Activated CD8-positive, alpha-beta T cell treated with anti-CD3 and anti-CD28 coated beads, Interleukin-2, amount 10 ng/mL, durations not matched to agents 7 days and 5 days (primary cell): ENCODE measurements at regions of chr18 and their contacts with region 1.

Region 1: GRCh38 chr18:11654736-11655605 is 34.1 kb upstream of the GNAL start:
- DNase-seq: peak; percentile 56
- ATAC-seq: peak; percentile 53
- H3K4me3 Mint-ChIP-seq: no peak overlapping the region
- H3K27ac Mint-ChIP-seq: no peak overlapping the region
- H3K4me1 Mint-ChIP-seq: no peaks in the 10 kb centered on the region
- H3K27me3 Mint-ChIP-seq: peaks cover 29% of the 10 kb centered on the region

Region 2: GRCh38 chr18:11600321-11600720 is 54.6 kb before region 1 on chr18:
- CTCF ChIA-PET with region 1: no interaction called
- POLR2A ChIA-PET with region 1: no interaction called
- DNase-seq: no peak
- ATAC-seq: no peak
- H3K4me3 Mint-ChIP-seq: no peak overlapping the region
- H3K27ac Mint-ChIP-seq: no peak overlapping the region
- H3K4me1 Mint-ChIP-seq: no peaks in the 10 kb centered on the region
- H3K27me3 Mint-ChIP-seq: peaks cover 41% of the 10 kb centered on the region

Region 3: GRCh38 chr18:11665587-11665986 is 10.6 kb after region 1 on chr18:
- CTCF ChIA-PET with region 1: interaction called, 10 read pairs
- POLR2A ChIA-PET with region 1: no interaction called
- DNase-seq: no peak
- ATAC-seq: no peak
- H3K4me3 Mint-ChIP-seq: no peak overlapping the region
- H3K27ac Mint-ChIP-seq: no peak overlapping the region
- H3K4me1 Mint-ChIP-seq: no peaks in the 10 kb centered on the region
- H3K27me3 Mint-ChIP-seq: peaks cover 5% of the 10 kb centered on the region

Region 4: GRCh38 chr18:11733031-11733430 is 78.1 kb after region 1 on chr18:
- CTCF ChIA-PET with region 1: interaction called, 10 read pairs
- POLR2A ChIA-PET with region 1: no interaction called
- DNase-seq: peak; percentile 77
- ATAC-seq: peak; percentile 93
- H3K4me3 Mint-ChIP-seq: no peak overlapping the region
- H3K27ac Mint-ChIP-seq: no peak overlapping the region
- H3K4me1 Mint-ChIP-seq: no peaks in the 10 kb centered on the region
- H3K27me3 Mint-ChIP-seq: peaks cover 16% of the 10 kb centered on the region

Region 5: DNA sequence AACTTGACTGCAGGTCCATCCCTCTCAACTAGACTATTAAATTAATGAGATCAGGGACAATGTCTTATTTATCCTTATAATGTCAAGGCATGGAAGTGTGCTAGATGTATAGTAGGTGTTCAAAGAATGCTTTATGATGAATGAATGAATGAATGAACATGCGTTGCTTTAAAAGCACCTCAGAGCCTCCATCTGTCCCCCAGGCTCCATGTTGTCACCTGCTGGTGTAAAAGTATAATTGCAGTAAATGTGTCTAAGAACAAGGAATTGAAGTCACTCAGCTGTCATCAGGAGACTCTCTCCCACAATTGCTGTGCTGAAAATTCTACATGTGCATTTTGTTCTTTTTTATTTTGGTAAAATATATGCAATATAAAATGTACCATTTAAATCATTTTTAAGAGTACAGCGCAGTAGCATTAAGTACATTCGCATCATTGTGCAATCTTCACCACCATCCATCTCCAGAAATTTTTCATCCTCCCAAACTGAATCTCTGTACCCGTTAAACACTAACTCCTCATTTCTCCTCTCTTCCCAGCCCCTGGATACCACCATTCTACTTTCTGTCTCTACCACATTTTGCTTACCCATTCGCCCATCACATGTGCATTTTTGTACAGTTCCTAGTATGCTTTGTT is 86.7 kb after region 1 on chr18:
- CTCF ChIA-PET with region 1: interaction called, 14 read pairs
- POLR2A ChIA-PET with region 1: no interaction called
- DNase-seq: no peak
- ATAC-seq: no peak
- H3K4me3 Mint-ChIP-seq: no peak overlapping the region
- H3K27ac Mint-ChIP-seq: no peak overlapping the region
- H3K4me1 Mint-ChIP-seq: no peaks in the 10 kb centered on the region
- H3K27me3 Mint-ChIP-seq: peaks cover 30% of the 10 kb centered on the region

Region 6: DNA sequence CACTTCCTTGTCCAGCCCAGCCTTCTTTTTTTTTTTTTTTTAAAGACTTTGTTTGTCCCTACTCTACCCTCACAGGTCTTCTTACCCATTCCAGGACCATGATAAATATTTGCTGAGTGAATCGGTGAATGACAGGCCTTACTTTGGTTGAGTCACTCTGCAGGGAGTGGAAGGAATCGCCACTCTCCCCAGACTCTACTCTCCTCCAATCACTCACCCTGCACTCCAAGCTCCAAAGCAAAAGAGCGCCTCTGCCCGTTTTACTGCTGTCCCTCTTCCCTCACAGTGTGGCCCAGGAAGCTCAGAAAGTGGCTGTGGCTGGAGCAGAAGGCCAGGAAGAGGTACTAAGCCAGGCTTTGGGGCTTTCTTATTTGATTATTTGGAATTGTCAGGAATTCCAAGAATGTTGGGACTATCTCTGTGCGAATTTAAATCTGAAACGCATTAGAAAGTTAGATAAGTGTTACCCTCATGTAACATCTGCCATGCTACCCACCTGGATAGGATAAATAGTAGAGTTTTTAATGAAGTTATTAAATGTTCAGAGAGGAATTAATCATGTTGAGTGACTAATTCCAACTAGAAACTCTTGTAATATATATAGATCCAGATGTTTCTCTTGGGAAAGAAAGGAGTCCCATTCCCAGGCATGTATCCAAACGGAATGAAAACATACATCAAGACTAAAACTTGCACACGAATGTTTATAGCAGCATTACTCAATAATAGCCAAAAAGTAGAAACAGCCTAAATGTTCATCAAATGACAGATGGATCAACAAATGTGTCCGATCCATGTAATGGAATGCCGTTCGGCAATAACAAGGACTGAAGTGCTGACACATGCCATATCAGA is 153.3 kb after region 1 on chr18:
- CTCF ChIA-PET with region 1: no interaction called
- POLR2A ChIA-PET with region 1: no interaction called
- DNase-seq: no peak
- ATAC-seq: no peak
- H3K4me3 Mint-ChIP-seq: no peak overlapping the region
- H3K27ac Mint-ChIP-seq: no peak overlapping the region
- H3K4me1 Mint-ChIP-seq: no peaks in the 10 kb centered on the region
- H3K27me3 Mint-ChIP-seq: peaks cover 6% of the 10 kb centered on the region